ENCODE measurements at regions of chr4 and their contacts with region 1.

Region 1: GRCh38 chr4:108080747-108081146 is 88.0 kb downstream of the LEF1 start:
- DNase-seq: peak; percentile 23 to 86 (median 67)
- ATAC-seq: peak; percentile 85
- H3K4me3 ChIP-seq: peak overlapping the region; percentile 3 to 6
- H3K4me3 Mint-ChIP-seq: peak overlapping the region; percentile 72
- H3K27ac ChIP-seq: peak overlapping the region; percentile 39 to 60
- H3K27ac Mint-ChIP-seq: peak overlapping the region; percentile 99
- H3K4me1 ChIP-seq: peaks cover 75% of the 10 kb centered on the region
- H3K4me1 Mint-ChIP-seq: peaks cover 67% of the 10 kb centered on the region
- H3K27me3 ChIP-seq: no peaks in the 10 kb centered on the region
- H3K27me3 Mint-ChIP-seq: no peaks in the 10 kb centered on the region
- CTCF ChIP-seq: no peak

Region 2: DNA sequence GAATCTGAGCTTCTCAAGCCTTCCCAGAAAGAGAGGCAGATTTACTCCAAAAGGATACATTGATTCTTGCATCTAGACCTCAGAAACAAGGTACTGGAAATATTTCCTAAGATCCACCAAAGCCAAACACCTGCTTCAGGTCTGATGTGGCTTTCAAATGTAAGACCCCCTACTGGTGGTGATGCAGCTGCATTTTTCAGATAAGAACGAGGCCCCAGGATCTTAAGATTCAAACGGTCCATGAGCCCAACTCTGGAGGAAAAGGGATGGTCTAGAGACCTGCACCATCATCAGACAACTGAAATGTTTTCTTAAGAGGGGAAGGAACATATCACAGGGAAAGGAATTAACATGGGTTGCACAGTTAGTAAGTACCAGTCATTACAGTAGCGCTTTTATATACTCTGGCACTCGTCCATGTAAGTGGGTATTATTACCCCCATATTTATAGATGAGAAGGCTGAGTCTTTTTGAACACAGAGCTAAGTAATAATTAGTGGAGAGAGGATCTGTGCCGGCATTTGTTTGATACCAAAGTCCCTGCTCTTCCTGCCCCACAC is 14.3 kb after region 1 on chr4:
- CTCF ChIA-PET with region 1: no interaction called
- POLR2A ChIA-PET with region 1: interaction called, 5 read pairs
- intact Hi-C with region 1: loop called (anchors 1 to 2 kb)
- DNase-seq: peak in 2 of 9 experiments; percentile 25 to 56
- ATAC-seq: peak; percentile 47
- H3K4me3 ChIP-seq: no peak overlapping the region
- H3K4me3 Mint-ChIP-seq: peak overlapping the region; percentile 50
- H3K27ac ChIP-seq: peak overlapping the region in 1 of 2 experiments; percentile 7
- H3K27ac Mint-ChIP-seq: peak overlapping the region; percentile 96
- H3K4me1 ChIP-seq: peaks cover 86% of the 10 kb centered on the region
- H3K4me1 Mint-ChIP-seq: peaks cover 83% of the 10 kb centered on the region
- H3K27me3 ChIP-seq: no peaks in the 10 kb centered on the region
- H3K27me3 Mint-ChIP-seq: no peaks in the 10 kb centered on the region
- CTCF ChIP-seq: peak; percentile 35

Region 3: GRCh38 chr4:108160741-108161352 is 80.1 kb after region 1 on chr4:
- CTCF ChIA-PET with region 1: interaction called, 6 read pairs
- POLR2A ChIA-PET with region 1: interaction called, 14 read pairs
- intact Hi-C with region 1: loop called in 1 of 2 experiments (anchors 5 kb)
- DNase-seq: peak in 2 of 9 experiments; percentile 40 to 65
- ATAC-seq: peak; percentile 40
- H3K4me3 ChIP-seq: peak overlapping the region; percentile 73 to 78
- H3K4me3 Mint-ChIP-seq: peak overlapping the region; percentile 83
- H3K27ac ChIP-seq: peak overlapping the region in 1 of 2 experiments; percentile 28
- H3K27ac Mint-ChIP-seq: peak overlapping the region; percentile 91
- H3K4me1 ChIP-seq: peaks cover 37% of the 10 kb centered on the region
- H3K4me1 Mint-ChIP-seq: peaks cover 71% of the 10 kb centered on the region
- H3K27me3 ChIP-seq: peaks cover 0 to 8% of the 10 kb centered on the region in 2 experiments
- H3K27me3 Mint-ChIP-seq: no peaks in the 10 kb centered on the region
- CTCF ChIP-seq: no peak

Region 4: DNA sequence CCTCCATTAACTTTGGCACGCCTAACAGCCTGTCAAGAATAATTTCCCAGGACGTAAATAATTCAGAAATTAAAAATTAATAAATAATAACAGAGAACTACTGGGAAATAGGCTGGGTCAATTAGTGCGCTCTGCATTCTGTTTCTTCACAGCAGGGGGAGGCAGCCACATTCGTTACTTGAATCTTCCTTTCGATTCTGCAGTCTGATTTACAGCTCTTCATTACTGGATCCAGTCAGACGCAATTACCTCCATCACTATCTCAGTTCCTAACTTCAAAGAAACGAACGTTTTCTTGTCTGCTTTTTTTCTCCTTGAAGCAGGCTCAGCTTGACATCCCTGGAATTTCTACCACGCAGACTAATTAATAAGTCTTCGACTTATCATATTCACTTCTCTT is 530.6 kb after region 1 on chr4:
- CTCF ChIA-PET with region 1: no interaction called
- POLR2A ChIA-PET with region 1: no interaction called
- intact Hi-C with region 1: no loop called
- DNase-seq: no peak
- ATAC-seq: no peak
- H3K4me3 ChIP-seq: no peak overlapping the region
- H3K4me3 Mint-ChIP-seq: no peak overlapping the region
- H3K27ac ChIP-seq: no peak overlapping the region
- H3K27ac Mint-ChIP-seq: no peak overlapping the region
- H3K4me1 ChIP-seq: no peaks in the 10 kb centered on the region
- H3K4me1 Mint-ChIP-seq: peaks cover 12% of the 10 kb centered on the region
- H3K27me3 ChIP-seq: no peaks in the 10 kb centered on the region
- H3K27me3 Mint-ChIP-seq: no peaks in the 10 kb centered on the region
- CTCF ChIP-seq: no peak